PC-9 (cell line): ENCODE measurements at regions of chr12 and their contacts with region 1.

Region 1: GRCh38 chr12:46675736-46676135 is 150.1 kb downstream of the SLC38A4 start:
- DNase-seq: no peak
- H3K4me3 ChIP-seq: no peak overlapping the region
- H3K27ac ChIP-seq: no peak overlapping the region
- H3K4me1 ChIP-seq: peaks cover 26% of the 10 kb centered on the region; the same call in 1 of the 2 replicates
- H3K27me3 ChIP-seq: no peaks in the 10 kb centered on the region
- CTCF ChIP-seq: peak; percentile 76

Region 2: DNA sequence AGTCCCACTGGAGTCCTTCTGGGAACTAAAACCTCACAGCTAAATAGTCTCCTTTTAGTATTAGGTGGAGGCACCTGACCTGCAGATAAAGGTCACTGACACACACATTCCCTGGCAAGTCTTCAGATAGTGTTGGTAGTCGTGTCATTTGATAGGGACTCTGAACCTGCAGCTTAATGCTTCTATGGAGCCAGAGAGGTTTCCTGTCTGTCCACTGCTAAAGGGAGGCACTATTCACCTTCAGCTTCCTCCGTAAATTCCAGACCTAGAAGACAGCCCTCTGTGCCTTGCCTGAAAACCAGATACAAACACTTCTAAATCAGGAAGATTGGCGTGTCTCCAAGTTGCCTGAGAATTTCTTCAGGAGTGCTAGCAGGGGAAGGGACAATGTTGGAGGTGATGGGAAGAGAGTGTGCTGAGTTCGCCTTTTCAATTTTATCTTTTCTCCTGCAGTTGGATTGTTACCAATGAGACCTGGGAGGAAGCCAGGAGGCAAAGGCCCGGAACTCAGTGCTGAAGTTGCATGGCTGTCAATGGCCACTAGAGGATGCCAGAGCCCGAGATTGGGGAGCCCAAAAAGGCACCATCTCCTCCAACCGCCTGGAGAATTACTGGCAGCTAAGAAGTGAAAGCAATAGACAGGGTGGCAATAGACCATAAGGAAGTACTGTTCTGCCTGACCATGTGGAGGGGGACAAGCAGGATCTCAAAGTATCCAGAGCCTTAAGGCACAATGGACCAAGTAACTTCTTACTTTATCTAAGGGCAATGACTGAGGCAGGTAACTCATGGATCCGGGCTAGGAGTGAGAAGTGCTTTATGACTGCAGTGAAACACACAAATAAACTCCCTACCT is 603.7 kb before region 1 on chr12:
- CTCF ChIA-PET with region 1: no interaction called
- POLR2A ChIA-PET with region 1: no interaction called
- intact Hi-C with region 1: loop called (anchors 2 kb)
- DNase-seq: peak; percentile 56 to 69
- H3K4me3 ChIP-seq: no peak overlapping the region
- H3K27ac ChIP-seq: no peak overlapping the region
- H3K4me1 ChIP-seq: no peaks in the 10 kb centered on the region
- H3K27me3 ChIP-seq: no peaks in the 10 kb centered on the region
- CTCF ChIP-seq: peak; percentile 90

Region 3: GRCh38 chr12:46153268-46153872 is 522.4 kb before region 1 on chr12:
- CTCF ChIA-PET with region 1: no interaction called
- POLR2A ChIA-PET with region 1: no interaction called
- intact Hi-C with region 1: loop called (anchors 5 kb)
- DNase-seq: peak in 1 of 2 experiments; percentile 35
- H3K4me3 ChIP-seq: no peak overlapping the region
- H3K27ac ChIP-seq: no peak overlapping the region
- H3K4me1 ChIP-seq: peaks cover 19% of the 10 kb centered on the region
- H3K27me3 ChIP-seq: no peaks in the 10 kb centered on the region
- CTCF ChIP-seq: peak; percentile 77

Region 4: GRCh38 chr12:46372544-46373110 is 303.1 kb before region 1 on chr12 and contains the start of gene SLC38A2:
- CTCF ChIA-PET with region 1: no interaction called
- POLR2A ChIA-PET with region 1: interaction called, 8 read pairs
- intact Hi-C with region 1: loop called (anchors 5 kb)
- DNase-seq: peak; percentile 70 to 94
- H3K4me3 ChIP-seq: peak within 1 kb of the TSS; percentile 94
- H3K27ac ChIP-seq: peak within 1 kb of the TSS; percentile 97
- H3K4me1 ChIP-seq: peaks cover 43% of the 10 kb centered on the region
- H3K27me3 ChIP-seq: no peaks in the 10 kb centered on the region
- CTCF ChIP-seq: no peak
- total RNA-seq, gene SLC38A2: 193 and 322 TPM in 2 replicates

Region 5: GRCh38 chr12:46556105-46556559 is 119.6 kb before region 1 on chr12:
- CTCF ChIA-PET with region 1: no interaction called
- POLR2A ChIA-PET with region 1: no interaction called
- intact Hi-C with region 1: loop called (anchors 5 kb)
- DNase-seq: peak in 1 of 2 experiments; percentile 94
- H3K4me3 ChIP-seq: peak overlapping the region; percentile 40; the same call in 1 of the 2 replicates
- H3K27ac ChIP-seq: peak overlapping the region; percentile 94
- H3K4me1 ChIP-seq: peaks cover 68% of the 10 kb centered on the region
- H3K27me3 ChIP-seq: no peaks in the 10 kb centered on the region
- CTCF ChIP-seq: no peak

Region 6: DNA sequence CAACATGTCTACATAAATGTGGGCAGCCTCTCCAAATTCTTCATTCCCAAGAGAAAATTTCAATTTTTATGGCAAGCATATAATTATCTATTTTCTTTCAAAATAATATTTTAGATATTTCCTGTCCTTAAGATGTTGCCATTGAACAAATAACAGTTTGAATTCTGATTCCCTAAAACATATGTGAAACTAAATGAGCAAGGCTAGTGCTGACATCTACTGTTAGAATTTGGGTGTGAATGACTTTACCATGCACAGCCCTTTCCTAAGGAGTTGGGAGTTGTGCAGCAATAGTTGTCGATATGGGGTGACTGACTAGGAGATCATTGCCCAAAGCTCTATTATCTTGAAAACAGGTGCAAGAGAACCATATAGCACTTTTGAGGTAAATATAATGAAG is 258.2 kb after region 1 on chr12:
- CTCF ChIA-PET with region 1: no interaction called
- POLR2A ChIA-PET with region 1: no interaction called
- intact Hi-C with region 1: loop called (anchors 5 kb)
- DNase-seq: peak in 1 of 2 experiments; percentile 7
- H3K4me3 ChIP-seq: no peak overlapping the region
- H3K27ac ChIP-seq: no peak overlapping the region
- H3K4me1 ChIP-seq: no peaks in the 10 kb centered on the region; the same call in 1 of the 2 replicates
- H3K27me3 ChIP-seq: no peaks in the 10 kb centered on the region
- CTCF ChIP-seq: peak; percentile 70

Region 7: GRCh38 chr12:46983393-46984266 is 307.9 kb after region 1 on chr12:
- CTCF ChIA-PET with region 1: no interaction called
- POLR2A ChIA-PET with region 1: no interaction called
- intact Hi-C with region 1: loop called (anchors 2 kb)
- DNase-seq: peak; percentile 44 to 62
- H3K4me3 ChIP-seq: no peak overlapping the region
- H3K27ac ChIP-seq: no peak overlapping the region
- H3K4me1 ChIP-seq: peaks cover 14% of the 10 kb centered on the region
- H3K27me3 ChIP-seq: no peaks in the 10 kb centered on the region
- CTCF ChIP-seq: peak; percentile 84